ENCODE measurements at regions of chr7 and their contacts with region 1.

Region 1: GRCh38 chr7:98021588-98022351 is 31.8 kb upstream of the OCM2 start:
- DNase-seq: peak; percentile 56 to 97 (median 87)

Region 2: GRCh38 chr7:97697396-97697795 is 324.4 kb before region 1 on chr7:
- intact Hi-C with region 1: no loop called
- DNase-seq: no peak

Region 3: DNA sequence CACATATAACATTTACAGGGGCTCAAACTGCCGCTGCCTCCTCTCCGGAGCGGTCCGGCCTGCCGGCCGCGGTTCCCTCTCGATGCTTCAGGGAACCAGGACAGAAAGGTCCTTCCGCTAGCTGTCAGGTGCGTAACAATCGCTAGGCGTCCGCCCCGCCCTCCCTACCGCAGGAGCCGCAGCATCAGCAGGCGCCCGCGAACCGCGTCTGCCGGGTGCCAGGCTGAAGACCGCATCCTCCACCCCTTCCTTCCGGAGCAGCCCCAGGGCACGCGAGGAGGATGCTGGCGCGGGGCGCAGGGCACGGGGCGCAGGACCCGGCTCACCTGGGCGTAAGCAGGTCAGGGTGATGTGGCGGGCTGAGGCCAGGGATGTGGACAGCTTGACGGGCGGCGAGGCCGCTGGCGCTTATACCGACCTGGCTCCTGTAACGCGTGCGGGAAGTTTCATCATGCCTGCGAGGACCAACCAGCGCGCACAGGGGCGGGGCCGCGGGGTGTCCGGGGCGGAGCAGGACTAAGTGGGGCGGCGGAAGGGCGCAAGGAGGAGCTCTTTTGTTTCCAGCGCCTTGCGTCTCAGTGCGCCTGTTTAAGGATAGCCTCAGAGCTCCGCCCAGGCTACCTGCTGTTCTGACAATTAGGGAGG is 149.6 kb before region 1 on chr7 and contains the start of gene ASNS:
- intact Hi-C with region 1: no loop called
- DNase-seq: peak; percentile 88 to 99 (median 95)

Region 4: DNA sequence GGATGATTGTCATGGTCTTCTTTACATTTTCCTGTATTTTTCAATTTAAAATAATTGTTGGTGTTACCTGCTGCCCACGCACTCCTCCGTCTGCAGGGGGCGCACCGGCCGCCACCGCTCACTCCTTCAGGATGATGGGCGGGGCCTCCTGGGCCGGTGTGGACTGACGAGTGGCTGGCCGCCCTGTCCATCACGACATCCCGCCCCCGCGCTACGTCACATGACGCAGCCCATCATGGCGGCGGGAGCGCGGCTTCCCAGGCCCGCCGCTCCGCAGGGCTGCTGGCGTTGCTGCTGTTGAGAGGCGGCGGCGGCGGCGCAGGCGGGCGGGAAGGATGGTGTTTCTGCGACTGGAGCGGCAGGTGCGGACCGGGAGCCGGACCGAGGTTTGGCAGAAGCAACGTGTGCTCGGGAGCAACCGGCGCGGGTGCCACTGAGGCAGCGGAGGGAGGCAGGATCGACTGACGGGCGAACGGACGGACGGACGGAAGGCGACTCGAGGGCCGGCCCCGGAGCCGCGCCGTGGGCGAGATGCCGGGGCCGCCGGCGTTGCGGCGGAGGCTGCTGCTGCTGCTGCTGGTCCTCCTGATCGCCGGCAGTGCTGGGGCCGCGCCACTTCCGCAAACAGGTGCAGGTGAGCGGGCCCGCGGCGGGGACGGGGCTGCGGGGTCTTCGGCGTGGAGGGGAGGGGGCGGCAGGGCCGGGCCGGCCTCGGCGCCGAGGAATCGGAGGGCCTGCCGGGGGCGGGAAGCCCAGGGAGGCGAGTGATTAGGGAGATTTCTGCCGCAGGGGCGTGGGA is 85.1 kb after region 1 on chr7 and contains the start of gene LMTK2:
- intact Hi-C with region 1: loop called (anchors 5 kb)
- DNase-seq: peak; percentile 91 to 99 (median 96)

Region 5: DNA sequence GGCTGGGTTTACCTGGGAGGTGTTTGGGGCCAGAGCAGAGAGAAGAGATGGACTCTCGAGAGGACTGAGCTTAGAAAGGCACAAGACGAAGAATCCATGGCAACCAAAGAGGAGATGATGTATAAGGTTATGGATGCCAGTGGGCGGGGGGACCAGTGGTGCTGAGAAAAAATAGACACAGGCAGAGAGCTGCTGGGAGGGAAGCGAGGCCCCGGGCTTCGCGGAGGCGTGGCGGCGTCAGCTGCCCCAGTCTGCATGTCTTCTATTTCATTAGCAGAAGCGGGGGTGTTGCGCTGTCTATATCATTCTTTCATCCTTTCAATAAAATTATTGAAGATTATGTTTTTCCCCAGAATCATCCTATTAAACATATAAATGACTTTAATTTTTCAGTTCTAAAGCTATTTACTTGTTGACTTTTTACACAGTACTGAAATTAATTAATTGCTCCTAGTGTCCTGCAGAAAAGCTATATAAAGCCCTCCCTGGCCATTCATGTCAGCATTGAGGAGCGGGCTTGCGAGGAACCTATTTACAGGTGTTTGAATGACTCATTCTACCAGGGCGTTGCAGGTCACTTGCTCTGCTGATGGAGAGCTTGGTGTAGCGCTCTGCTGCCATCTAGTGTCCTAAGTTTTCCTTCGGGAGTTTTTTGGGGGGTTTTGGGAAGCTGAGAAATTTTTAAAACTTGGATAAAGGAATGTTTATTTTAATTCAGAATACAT is 146.6 kb after region 1 on chr7:
- intact Hi-C with region 1: loop called (anchors 1 kb)
- DNase-seq: peak in 8 of 10 donors; percentile 58 to 93 (median 70)

Region 6: GRCh38 chr7:98240961-98241674 is 219.3 kb after region 1 on chr7:
- intact Hi-C with region 1: loop called (anchors 5 kb)
- DNase-seq: peak in 8 of 10 donors; percentile 28 to 93 (median 52)

Region 7: GRCh38 chr7:98584830-98585229 is 563.1 kb after region 1 on chr7:
- intact Hi-C with region 1: no loop called
- DNase-seq: no peak

Measured in posterior cingulate gyrus (tissue), 11 donors.